Activated naive CD4-positive, alpha-beta T cell treated with anti-CD3 and anti-CD28 coated beads for 36 hours (primary cell): ENCODE measurements at regions of chr11 and their contacts with region 1.

Region 1: GRCh38 chr11:118216621-118217481 is 8.0 kb downstream of the JAML start:
- DNase-seq: peak; percentile 83
- H3K4me3 Mint-ChIP-seq: peak overlapping the region; percentile 64
- H3K27ac Mint-ChIP-seq: peak overlapping the region; percentile 100
- H3K4me1 Mint-ChIP-seq: peaks cover 94% of the 10 kb centered on the region
- H3K27me3 Mint-ChIP-seq: no peaks in the 10 kb centered on the region

Region 2: DNA sequence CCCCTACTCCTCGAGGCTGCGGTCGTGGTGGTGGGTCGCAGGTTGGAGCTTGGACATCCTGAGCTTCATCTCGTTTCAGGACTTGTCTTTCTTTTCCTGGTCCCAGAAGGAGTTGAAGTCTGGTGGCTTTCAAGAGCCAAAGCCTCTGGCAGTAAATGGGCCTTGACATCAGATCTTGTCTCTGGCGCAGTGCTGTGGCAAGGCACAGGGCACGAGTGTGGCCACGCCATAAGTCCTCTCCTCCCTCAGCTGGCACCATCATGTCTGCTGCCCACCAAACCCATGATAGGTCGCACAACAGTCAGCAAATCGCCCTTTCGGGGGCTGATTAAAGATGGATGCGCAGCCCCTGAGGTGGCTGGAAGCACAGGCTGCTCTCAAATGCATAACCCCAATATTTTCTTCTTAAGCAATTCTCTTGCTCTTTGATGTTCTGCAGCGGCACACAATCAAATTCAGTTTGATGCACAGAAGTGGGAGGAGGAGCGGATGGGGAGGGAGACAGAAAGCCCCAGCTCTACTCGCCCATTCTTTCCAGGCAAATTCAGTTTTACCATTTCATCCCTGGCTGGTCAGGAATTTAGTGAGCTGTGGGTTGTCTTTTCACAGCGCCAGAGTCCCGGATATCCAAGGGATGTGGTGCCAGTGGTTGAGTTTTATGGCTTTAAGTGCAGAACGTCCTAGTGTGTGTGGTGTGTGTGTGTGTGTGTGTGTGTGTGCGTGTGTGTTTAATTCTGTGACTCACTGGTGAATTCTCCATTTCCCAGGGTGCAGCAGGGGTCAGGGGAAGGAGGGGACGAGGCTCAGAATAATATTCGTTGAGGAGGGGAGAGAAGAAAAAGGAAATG is 581.9 kb before region 1 on chr11:
- CTCF ChIA-PET with region 1: no interaction called
- intact Hi-C with region 1: no loop called
- DNase-seq: no peak
- H3K4me3 Mint-ChIP-seq: no peak overlapping the region
- H3K27ac Mint-ChIP-seq: no peak overlapping the region
- H3K4me1 Mint-ChIP-seq: no peaks in the 10 kb centered on the region
- H3K27me3 Mint-ChIP-seq: peaks cover 3% of the 10 kb centered on the region

Region 3: DNA sequence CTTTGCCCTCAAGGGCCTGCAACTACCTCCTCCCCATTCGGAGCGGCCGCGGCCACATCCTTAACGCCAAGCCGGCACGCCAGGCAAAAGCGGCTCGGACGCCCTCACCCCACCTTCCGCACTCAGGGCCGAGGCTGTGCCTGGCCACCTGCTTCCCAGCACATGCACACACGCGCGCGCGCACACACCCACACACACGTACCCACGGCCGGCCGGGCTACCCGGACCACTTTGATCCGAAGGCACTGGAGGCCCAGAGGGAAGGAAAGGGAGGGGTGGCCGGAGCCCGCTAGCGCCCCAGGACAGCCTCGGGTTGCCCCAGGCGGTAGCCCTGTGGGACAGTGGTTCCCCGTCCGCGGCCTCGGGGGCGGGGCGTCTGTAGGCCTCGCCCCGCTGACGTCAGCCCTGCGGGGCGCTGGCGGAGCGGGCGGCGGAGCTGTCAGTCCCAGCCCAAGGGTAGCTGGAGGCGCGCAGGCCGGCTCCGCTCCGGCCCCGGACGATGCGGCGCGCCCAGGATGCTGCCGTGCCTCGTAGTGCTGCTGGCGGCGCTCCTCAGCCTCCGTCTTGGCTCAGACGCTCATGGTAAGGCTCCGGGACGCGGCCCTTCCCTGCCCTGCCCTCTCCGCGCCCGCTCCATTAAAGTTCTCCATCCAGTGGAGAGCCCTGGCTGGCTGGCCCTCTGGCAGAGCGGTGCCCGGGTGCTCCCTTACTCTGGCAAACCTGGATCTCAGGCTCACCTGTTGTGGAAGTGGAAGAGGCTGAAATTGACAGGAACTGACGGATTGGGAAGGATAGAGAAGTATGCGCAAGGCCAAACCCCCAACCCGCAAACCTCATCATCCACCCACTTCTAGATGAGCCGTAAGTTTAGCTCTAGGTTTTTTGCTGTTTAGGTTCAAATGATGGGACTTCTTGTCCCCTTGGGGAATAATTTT is 230.6 kb before region 1 on chr11 and contains the start of gene IL10RA:
- CTCF ChIA-PET with region 1: no interaction called
- intact Hi-C with region 1: loop called (anchors 2 kb)
- DNase-seq: peak; percentile 81
- H3K4me3 Mint-ChIP-seq: peak within 1 kb of the TSS; percentile 84
- H3K27ac Mint-ChIP-seq: peak within 1 kb of the TSS; percentile 88
- H3K4me1 Mint-ChIP-seq: peaks cover 63% of the 10 kb centered on the region
- H3K27me3 Mint-ChIP-seq: no peaks in the 10 kb centered on the region
- total RNA-seq, gene IL10RA: 11.3 to 16.1 TPM

Region 4: GRCh38 chr11:118046051-118046963 is 170.5 kb before region 1 on chr11:
- CTCF ChIA-PET with region 1: no interaction called
- intact Hi-C with region 1: loop called (anchors 5 kb)
- DNase-seq: peak; percentile 52
- H3K4me3 Mint-ChIP-seq: no peak overlapping the region
- H3K27ac Mint-ChIP-seq: peak overlapping the region; percentile 63
- H3K4me1 Mint-ChIP-seq: peaks cover 78% of the 10 kb centered on the region
- H3K27me3 Mint-ChIP-seq: no peaks in the 10 kb centered on the region

Region 5: DNA sequence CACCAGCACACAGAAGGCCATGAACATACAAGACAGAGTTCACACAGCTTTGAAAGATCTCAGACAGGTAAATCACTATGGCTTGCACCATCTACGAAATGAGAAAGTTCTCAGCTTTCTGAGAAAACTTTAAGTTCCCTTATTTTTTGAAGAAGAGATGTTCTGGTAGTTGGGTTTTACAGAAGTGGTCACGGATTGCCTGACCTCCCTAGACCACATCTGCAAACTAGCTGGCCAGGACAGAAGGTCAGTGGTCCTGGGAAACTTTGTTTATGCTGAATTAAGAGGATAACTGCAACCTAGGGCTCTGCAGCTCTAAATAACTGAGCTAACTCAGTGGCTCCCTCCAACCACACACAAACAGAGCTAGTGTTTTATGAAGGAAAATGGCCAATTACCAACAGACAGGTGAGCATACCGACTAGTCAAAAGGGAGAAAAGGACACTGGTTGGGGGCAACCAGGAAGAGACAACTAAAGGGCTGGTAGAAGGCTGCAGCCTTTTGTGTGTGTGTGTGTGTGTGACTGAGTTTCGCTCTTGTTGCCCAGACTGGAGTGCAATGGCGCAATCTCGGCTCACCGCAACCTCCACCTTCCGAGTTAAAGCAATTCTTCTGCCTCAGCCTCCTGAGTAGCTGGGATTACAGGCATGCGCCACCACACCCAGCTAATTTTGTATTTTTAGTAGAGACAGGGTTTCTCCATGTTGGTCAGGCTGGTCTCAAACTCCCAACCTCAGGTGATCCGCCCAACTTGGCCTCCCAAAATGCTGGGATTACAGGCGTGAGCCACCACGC is 31.9 kb before region 1 on chr11:
- CTCF ChIA-PET with region 1: no interaction called
- intact Hi-C with region 1: no loop called
- DNase-seq: no peak
- H3K4me3 Mint-ChIP-seq: no peak overlapping the region
- H3K27ac Mint-ChIP-seq: no peak overlapping the region
- H3K4me1 Mint-ChIP-seq: no peaks in the 10 kb centered on the region
- H3K27me3 Mint-ChIP-seq: peaks cover 4% of the 10 kb centered on the region

Region 6: DNA sequence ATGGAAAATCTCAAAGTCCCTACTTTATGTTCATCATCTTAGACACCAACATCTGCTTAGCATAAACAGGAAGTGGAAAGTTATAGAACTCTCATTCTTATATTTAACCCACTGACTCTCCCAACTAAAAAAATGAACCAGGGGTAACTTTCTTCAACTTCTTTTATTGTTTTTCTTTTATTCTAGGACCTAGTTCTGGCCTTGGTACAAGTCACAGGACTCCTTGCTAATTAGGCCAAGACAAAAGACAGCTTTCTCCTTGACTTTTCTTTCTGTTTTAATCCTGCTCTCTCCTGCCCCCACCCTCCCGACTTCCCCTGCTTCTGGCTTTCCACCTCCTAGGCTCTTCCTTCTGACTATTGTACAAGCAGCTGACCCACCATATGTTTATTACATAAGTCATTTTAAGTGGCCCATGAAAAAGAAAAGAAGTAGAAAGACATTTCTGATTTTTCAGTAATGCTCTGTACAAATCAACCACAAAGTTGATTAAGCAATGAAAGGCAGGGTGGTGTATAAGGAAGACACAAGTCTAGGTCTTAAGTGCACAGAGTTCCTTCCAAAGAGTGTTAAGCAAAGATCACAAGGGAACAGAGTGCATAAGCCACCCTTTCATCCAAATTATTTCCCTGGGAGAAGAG is 10.3 kb before region 1 on chr11:
- CTCF ChIA-PET with region 1: interaction called, 7 read pairs
- intact Hi-C with region 1: loop called (anchors 1 kb)
- DNase-seq: no peak
- H3K4me3 Mint-ChIP-seq: peak overlapping the region; percentile 11
- H3K27ac Mint-ChIP-seq: peak overlapping the region; percentile 88
- H3K4me1 Mint-ChIP-seq: peaks cover 32% of the 10 kb centered on the region
- H3K27me3 Mint-ChIP-seq: no peaks in the 10 kb centered on the region

Region 7: DNA sequence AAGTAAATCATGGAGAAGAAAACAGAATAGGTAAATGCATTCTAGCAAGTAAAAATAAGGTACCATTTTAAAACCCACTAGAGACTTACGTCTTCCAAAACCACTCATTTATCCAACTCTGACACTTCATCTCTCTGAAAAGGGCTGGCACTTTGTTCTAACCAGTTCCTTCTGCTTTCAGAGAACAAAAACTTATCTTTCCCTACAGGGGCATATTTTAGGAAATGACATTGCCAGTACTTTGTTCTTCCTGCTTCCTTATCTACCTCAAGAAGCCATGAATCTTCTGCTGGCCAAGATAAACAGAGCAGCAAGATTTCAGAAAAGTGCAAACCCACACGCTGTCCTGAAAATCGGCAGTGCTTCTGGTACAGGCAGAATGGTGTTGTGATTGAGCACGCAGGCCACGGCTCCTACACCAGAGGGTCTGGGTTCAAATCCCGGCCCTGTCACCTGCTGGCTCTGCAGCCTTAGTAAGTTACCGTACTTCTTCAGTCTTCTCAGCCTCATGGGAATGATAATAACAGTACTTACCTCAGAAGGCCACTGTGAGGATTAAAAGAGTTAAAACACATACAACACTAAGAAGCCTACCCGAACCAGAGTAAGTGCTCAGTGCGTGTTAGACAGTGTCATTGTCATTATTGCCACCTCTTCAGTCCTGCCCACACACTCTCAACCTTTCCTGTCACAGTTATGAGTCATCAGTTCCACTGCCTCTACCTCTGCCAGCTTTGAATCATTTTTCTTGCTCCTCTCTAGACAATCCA is 24.3 kb after region 1 on chr11:
- CTCF ChIA-PET with region 1: interaction called, 12 read pairs
- intact Hi-C with region 1: loop called (anchors 1 kb)
- DNase-seq: peak; percentile 87
- H3K4me3 Mint-ChIP-seq: peak overlapping the region; percentile 77
- H3K27ac Mint-ChIP-seq: peak overlapping the region; percentile 99
- H3K4me1 Mint-ChIP-seq: peaks cover 91% of the 10 kb centered on the region
- H3K27me3 Mint-ChIP-seq: no peaks in the 10 kb centered on the region

Region 8: DNA sequence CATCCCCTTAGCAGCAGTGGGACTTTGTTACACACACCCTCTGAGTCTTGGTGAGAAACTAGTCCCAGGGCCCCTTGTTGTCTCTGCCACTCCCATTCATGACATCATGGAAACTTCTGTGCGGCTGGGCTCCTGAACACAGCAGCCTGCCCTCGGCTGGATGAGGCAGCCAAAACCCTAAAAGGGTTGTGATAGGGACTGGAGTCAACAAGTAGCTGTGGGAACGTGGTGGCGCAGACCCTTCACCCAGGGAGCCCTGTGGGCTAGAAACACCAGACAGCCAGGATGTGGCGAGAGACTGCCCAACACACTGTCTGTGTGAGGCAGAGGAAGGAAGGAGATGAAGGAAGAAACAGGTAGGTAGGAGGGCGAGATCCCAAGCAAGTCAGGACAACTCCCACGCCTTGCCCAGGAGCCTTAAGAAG is 121.8 kb after region 1 on chr11:
- CTCF ChIA-PET with region 1: no interaction called
- intact Hi-C with region 1: loop called (anchors 2 kb)
- DNase-seq: peak; percentile 97
- H3K4me3 Mint-ChIP-seq: peak overlapping the region; percentile 81
- H3K27ac Mint-ChIP-seq: peak overlapping the region; percentile 100
- H3K4me1 Mint-ChIP-seq: peaks cover 43% of the 10 kb centered on the region
- H3K27me3 Mint-ChIP-seq: no peaks in the 10 kb centered on the region

Region 9: DNA sequence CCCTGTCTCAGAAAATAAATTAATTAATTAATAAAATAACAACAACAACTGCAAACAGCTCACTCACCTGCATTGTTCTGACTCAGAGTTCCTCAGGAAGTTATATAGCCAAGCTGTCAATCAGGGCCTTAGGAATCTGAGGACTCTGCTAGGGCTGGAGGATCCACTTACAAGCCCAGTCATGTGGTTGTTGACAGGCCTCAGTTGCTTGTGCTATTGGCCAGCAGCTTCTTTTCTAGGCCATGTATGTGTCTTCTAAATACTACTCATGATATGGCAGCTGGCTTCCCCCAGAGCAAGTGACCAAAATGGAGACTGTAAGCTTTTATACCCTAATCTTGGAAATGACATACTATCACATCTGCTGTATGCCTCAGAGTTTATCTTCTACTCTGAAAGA is 163.7 kb after region 1 on chr11:
- CTCF ChIA-PET with region 1: no interaction called
- intact Hi-C with region 1: no loop called
- DNase-seq: no peak
- H3K4me3 Mint-ChIP-seq: no peak overlapping the region
- H3K27ac Mint-ChIP-seq: no peak overlapping the region
- H3K4me1 Mint-ChIP-seq: peaks cover 7% of the 10 kb centered on the region
- H3K27me3 Mint-ChIP-seq: no peaks in the 10 kb centered on the region

Region 10: DNA sequence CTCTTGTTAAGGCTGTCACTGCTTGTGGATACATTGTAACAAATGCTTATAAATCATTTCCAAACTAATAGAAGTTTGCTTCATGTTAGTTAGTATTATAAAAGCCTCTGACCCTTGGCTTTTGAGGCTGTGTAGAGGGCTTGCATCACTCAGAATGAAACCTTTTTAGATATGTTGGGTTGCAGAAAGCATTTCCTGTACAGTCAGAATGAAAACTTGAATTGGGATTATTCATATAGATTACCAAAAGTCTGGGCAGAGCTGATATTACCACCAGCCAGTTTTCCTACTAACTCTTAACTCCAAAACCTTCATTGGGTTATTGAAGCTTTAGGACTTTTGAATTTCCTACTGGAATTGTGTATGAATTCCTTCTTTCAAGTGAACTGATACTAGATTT is 231.4 kb after region 1 on chr11:
- CTCF ChIA-PET with region 1: no interaction called
- intact Hi-C with region 1: loop called (anchors 1 kb)
- DNase-seq: peak; percentile 24
- H3K4me3 Mint-ChIP-seq: no peak overlapping the region
- H3K27ac Mint-ChIP-seq: no peak overlapping the region
- H3K4me1 Mint-ChIP-seq: peaks cover 72% of the 10 kb centered on the region
- H3K27me3 Mint-ChIP-seq: no peaks in the 10 kb centered on the region